H1 (cell line): ENCODE measurements at regions of chr5 and their contacts with region 1.

Region 1: DNA sequence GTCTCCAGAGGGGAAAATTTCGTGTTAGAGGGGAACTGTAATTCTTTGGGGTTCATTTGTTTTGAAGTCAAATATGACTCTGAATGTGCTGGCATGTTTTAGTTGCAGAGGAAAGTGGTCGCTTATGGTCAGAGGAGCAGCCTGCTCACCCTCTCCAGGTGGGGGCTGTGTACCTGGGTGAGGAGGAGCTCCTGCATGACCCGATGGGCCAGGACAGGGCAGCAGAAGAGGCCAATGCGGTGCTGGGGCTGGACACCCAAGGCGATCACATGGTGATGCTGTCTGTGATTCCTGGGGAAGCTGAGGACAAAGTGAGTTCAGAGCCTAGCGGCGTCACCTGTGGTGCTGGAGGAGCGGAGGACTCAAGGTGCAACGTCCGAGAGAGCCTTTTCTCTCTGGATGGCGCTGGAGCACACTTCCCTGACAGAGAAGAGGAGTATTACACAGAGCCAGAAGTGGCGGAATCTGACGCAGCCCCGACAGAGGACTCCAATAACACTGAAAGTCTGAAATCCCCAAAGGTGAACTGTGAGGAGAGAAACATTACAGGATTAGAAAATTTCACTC is 13.5 kb downstream of the TXNDC15 start:
- DNase-seq: no peak
- H3K4me3 ChIP-seq: no peak overlapping the region
- H3K27ac ChIP-seq: 0 out of 2 replicates have a peak overlapping the region, but pooled peaks have one; percentile 32
- H3K4me1 ChIP-seq: no peaks in the 10 kb centered on the region
- H3K27me3 ChIP-seq: no peaks in the 10 kb centered on the region
- CTCF ChIP-seq: peak in 1 of 3 experiments; percentile 29; a peak in 1 of 4 replicates
- EP300 ChIP-seq: no peak
- POLR2A ChIP-seq: no peak
- RAD21 ChIP-seq: no peak

Region 2: DNA sequence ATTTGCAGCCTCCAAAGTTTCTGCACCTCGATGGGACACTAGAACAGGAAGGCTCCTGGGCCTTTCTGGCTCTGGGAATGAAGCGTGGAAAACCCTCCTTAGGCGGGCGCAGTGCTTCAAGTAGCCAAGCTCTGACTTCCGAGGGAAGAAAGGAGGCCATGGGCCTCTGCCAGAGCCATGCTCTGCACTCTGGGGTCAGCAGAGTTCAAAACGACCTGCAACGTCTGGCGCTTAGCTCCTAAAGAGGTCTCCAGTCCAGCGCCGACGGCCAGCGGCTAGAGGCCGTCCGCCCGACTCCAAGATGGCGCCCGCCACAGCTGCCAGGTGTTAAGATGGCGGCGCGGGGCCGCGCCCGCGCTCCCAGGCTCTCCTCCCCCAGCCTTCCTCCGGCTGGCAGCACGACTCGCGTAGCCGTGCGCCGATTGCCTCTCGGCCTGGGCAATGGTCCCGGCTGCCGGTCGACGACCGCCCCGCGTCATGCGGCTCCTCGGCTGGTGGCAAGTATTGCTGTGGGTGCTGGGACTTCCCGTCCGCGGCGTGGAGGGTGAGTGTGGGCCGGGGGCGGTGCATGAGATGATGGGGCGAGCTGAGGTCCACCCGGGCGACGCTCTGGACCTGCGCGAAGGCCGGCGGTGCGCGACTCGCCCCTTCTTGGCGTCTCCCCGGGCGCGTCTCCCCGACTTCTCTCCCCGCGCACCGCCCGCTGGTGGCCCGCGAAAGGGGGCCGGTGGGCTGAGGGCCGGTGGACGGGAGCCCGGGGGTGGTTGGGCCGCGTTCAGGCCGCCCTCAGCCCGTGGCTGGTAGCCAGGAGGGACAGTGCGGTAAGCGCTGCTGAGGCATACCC is 13.5 kb before region 1 on chr5 and contains the start of gene TXNDC15:
- CTCF ChIA-PET with region 1: interaction called, 3 read pairs
- POLR2A ChIA-PET with region 1: interaction called, 10 read pairs
- DNase-seq: peak; percentile 61 to 89
- H3K4me3 ChIP-seq: peak within 1 kb of the TSS; percentile 73 to 93 (median 78)
- H3K27ac ChIP-seq: peak within 1 kb of the TSS; percentile 79; the same call in 1 of the 2 replicates
- H3K4me1 ChIP-seq: peaks cover 0 to 12% (median 8%) of the 10 kb centered on the region in 4 experiments; a peak in 6 of 7 replicates
- H3K27me3 ChIP-seq: no peaks in the 10 kb centered on the region
- CTCF ChIP-seq: no peak
- EP300 ChIP-seq: no peak
- POLR2A ChIP-seq: peak in 1 of 2 experiments; percentile 91; a peak in 2 of 3 replicates
- RAD21 ChIP-seq: no peak
- total RNA-seq, gene TXNDC15: 30.8 and 34.5 TPM in 2 replicates